ENCODE measurements at regions of chr12 and their contacts with region 1.

Region 1: GRCh38 chr12:110896559-110896958 is 23.8 kb downstream of the MYL2 start:
- DNase-seq: no peak
- H3K4me3 ChIP-seq: no peak overlapping the region
- H3K27ac ChIP-seq: no peak overlapping the region
- H3K4me1 ChIP-seq: no peaks in the 10 kb centered on the region
- CTCF ChIP-seq: no peak

Region 2: DNA sequence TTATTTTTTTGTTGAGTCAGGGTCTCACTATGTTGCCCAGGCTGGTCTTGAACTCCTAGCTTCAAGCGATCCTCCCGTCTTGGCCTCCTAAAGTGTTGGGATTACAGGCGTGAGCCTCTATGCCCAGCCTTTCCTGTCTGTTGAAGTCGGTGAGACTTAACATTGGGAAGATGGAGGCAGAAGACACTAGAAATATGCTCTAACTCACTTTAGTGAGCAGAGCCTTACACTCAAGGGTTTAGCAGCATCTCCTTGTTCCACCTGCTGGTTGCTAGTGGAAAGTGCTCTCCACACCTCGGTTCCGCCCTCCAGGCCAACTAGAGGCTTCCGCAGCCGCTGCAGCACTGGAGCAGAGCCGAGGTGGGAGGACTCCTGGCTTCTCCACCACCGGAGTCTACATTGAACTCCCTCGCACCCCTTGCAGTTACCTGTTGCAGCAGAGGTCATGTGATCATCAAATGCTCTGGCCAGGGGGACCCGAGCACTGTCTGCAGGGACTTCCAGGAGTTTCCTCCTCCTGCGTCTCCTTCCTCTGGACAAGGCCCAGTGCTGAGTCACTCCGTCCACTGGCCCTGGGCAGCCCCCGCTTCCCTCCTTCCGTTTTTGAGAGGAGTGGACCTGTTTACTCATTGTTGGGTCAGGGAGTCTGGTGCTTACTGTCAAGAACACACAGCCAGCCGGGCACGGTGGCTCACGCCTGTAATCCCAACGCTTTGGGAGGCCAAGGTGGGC is 198.2 kb before region 1 on chr12:
- CTCF ChIA-PET with region 1: no interaction called
- POLR2A ChIA-PET with region 1: no interaction called
- intact Hi-C with region 1: no loop called
- DNase-seq: peak; percentile 93
- H3K4me3 ChIP-seq: no peak overlapping the region
- H3K27ac ChIP-seq: no peak overlapping the region
- H3K4me1 ChIP-seq: peaks cover 22% of the 10 kb centered on the region
- CTCF ChIP-seq: peak; percentile 85

Region 3: GRCh38 chr12:111174251-111174960 is 277.8 kb after region 1 on chr12:
- CTCF ChIA-PET with region 1: interaction called, 3 read pairs
- POLR2A ChIA-PET with region 1: no interaction called
- intact Hi-C with region 1: loop called (anchors 5 kb)
- DNase-seq: peak; percentile 38
- H3K4me3 ChIP-seq: no peak overlapping the region
- H3K27ac ChIP-seq: no peak overlapping the region
- H3K4me1 ChIP-seq: peaks cover 8% of the 10 kb centered on the region
- CTCF ChIP-seq: peak; percentile 74

Region 4: DNA sequence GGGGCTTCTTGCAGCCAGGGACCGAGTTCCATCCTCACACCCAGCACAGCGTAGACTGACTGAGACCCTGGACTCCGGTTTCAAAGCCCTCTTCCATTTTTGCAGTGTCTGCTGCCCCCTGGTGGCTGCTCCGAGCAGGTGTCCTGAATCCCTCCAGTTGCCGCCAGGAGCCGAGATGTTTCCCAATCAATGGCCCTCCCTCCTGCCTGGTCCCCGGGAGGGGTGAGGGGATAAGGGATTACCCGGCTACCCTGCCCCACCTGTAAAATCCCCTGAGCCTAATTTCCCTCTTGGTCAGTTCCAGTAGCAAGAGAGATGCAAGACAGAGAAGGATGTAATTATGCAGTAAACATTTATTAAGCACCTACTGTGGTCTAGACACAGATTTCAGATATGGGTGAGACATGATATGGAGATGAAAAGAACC is 417.3 kb after region 1 on chr12:
- CTCF ChIA-PET with region 1: no interaction called
- POLR2A ChIA-PET with region 1: no interaction called
- intact Hi-C with region 1: loop called (anchors 2 kb)
- DNase-seq: peak; percentile 63
- H3K4me3 ChIP-seq: no peak overlapping the region
- H3K27ac ChIP-seq: no peak overlapping the region
- H3K4me1 ChIP-seq: no peaks in the 10 kb centered on the region
- CTCF ChIP-seq: peak; percentile 97